GM12878 (cell line): ENCODE measurements at regions of chr11 and their contacts with region 1.

Region 1: GRCh38 chr11:106156290-106156937 is 79.0 kb downstream of the AASDHPPT start:
- DNase-seq: peak; percentile 12
- ATAC-seq: peak; percentile 80
- H3K4me3 ChIP-seq: no peak overlapping the region
- H3K27ac ChIP-seq: no peak overlapping the region
- H3K4me1 ChIP-seq: no peaks in the 10 kb centered on the region
- H3K27me3 ChIP-seq: no peaks in the 10 kb centered on the region
- CTCF ChIP-seq: peak; percentile 30 to 48 (median 43); a peak in 5 of 6 replicates
- EP300 ChIP-seq: no peak
- POLR2A ChIP-seq: no peak
- RAD21 ChIP-seq: peak; percentile 53

Region 2: DNA sequence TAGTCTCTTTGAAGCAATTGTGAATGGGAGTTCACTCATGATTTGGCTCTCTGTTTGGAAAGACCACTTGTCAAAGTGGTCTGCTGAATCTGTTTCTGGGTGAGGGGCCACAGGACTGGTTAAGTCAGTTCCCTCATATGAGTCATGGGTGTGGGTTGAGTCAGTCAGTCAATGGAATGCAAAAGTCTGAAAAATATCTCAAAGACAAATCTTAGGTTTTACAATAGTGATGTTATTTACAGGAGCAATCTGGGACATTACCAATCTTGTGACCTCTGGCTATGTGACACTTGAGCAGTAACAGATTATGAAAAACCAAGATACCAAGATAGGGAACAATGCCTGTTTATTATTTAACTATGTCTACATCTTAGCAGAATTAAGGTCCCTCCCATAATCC is 232.7 kb after region 1 on chr11:
- CTCF ChIA-PET with region 1: no interaction called
- POLR2A ChIA-PET with region 1: no interaction called
- RAD21 ChIA-PET with region 1: no interaction called
- SMC1A ChIA-PET with region 1: no interaction called
- in situ Hi-C with region 1: no loop called
- intact Hi-C with region 1: loop called (anchors 10 kb)
- DNase-seq: no peak
- ATAC-seq: no peak
- H3K4me3 ChIP-seq: no peak overlapping the region
- H3K27ac ChIP-seq: no peak overlapping the region
- H3K4me1 ChIP-seq: no peaks in the 10 kb centered on the region
- H3K27me3 ChIP-seq: no peaks in the 10 kb centered on the region
- CTCF ChIP-seq: no peak
- EP300 ChIP-seq: no peak
- POLR2A ChIP-seq: no peak
- RAD21 ChIP-seq: no peak

Region 3: DNA sequence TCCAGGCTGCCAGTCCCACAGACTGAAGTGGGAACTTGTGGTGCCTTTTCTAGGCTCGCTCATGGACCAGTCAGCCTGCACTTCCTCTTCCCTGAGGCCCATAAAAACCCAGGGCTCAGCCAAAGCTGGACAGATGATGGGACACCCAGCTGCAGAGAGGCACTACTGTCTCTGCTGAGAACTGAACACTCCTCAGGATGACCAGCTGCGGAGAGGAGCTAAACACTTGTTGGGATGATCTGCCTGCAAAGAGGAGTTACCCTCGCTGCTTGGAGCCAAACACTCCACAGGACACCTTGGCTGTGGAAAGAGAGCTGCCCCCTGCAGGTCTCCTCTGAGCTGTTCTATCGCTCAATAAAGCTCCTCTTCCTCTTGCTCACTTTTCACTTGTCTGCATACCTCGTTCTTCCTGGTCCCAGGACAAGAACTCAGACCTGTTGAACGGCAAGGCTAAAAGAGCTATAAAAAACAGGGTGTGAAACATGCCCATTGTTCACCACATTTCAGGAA is 396.3 kb after region 1 on chr11:
- CTCF ChIA-PET with region 1: no interaction called
- POLR2A ChIA-PET with region 1: no interaction called
- RAD21 ChIA-PET with region 1: no interaction called
- SMC1A ChIA-PET with region 1: no interaction called
- in situ Hi-C with region 1: no loop called
- intact Hi-C with region 1: no loop called
- DNase-seq: no peak
- ATAC-seq: no peak
- H3K4me3 ChIP-seq: no peak overlapping the region
- H3K27ac ChIP-seq: no peak overlapping the region
- H3K4me1 ChIP-seq: no peaks in the 10 kb centered on the region
- H3K27me3 ChIP-seq: no peaks in the 10 kb centered on the region
- CTCF ChIP-seq: no peak
- EP300 ChIP-seq: no peak
- POLR2A ChIP-seq: no peak
- RAD21 ChIP-seq: no peak

Region 4: GRCh38 chr11:106585061-106585460 is 428.6 kb after region 1 on chr11:
- CTCF ChIA-PET with region 1: interaction called, 10 read pairs
- POLR2A ChIA-PET with region 1: no interaction called
- RAD21 ChIA-PET with region 1: no interaction called
- SMC1A ChIA-PET with region 1: interaction called, 5 read pairs
- in situ Hi-C with region 1: no loop called
- intact Hi-C with region 1: loop called (anchors 10 kb)
- DNase-seq: no peak
- ATAC-seq: peak; percentile 51; the same call in 2 of the 3 replicates
- H3K4me3 ChIP-seq: no peak overlapping the region
- H3K27ac ChIP-seq: no peak overlapping the region
- H3K4me1 ChIP-seq: no peaks in the 10 kb centered on the region
- H3K27me3 ChIP-seq: no peaks in the 10 kb centered on the region
- CTCF ChIP-seq: peak in 2 of 3 experiments; percentile 8 to 18; a peak in 1 of 6 replicates
- EP300 ChIP-seq: no peak
- POLR2A ChIP-seq: no peak
- RAD21 ChIP-seq: no peak